SK-N-SH (cell line): ENCODE measurements at regions of chr22 and their contacts with region 1.

Region 1: DNA sequence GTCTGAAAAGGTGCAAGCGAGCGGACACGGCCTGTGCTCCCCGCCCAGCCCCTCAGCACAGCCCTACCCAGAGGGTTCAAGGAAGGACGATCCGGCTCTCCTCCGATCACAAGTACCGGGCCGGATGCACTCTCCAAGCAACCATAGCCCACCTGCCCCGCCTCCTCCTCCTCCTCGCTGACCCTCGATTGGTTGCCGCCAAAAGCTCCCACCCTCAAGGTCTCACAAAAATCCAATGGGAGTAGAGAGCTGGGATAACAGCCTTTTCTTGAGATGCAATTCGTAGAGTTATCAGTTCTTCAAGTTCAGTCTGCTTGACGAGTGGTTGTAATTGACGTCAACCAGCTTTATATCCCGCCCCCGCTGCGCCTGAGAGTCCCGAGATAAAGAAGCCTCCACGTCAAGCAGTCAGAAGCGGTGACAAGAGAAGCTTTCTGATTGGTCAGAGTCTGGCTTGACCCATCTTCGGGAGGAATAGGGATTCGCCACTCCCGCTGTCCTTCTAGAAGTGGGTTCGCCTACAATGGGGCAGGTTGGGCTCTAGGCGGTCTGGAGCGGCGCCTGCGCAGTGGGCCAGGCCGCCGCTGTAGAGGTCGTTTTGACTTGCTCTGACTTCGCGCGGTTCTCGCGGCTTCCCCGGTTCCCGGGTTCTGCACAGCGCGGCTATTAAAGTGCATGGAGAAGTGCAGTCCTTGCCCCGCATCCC is at the start of gene IFT27:
- DNase-seq: peak; percentile 99
- H3K4me3 ChIP-seq: peak within 1 kb of the TSS; percentile 84 to 86
- H3K27ac ChIP-seq: peak within 1 kb of the TSS in 1 of 2 experiments; percentile 76; a peak in 2 of 4 replicates
- H3K4me1 ChIP-seq: peaks cover 0 to 10% of the 10 kb centered on the region in 2 experiments; a peak in 3 of 4 replicates
- H3K27me3 ChIP-seq: no peaks in the 10 kb centered on the region
- CTCF ChIP-seq: no peak
- EP300 ChIP-seq: no peak
- RAD21 ChIP-seq: no peak
- polyA plus RNA-seq, gene IFT27: 29.4 and 31.5 TPM in 2 replicates

Region 2: DNA sequence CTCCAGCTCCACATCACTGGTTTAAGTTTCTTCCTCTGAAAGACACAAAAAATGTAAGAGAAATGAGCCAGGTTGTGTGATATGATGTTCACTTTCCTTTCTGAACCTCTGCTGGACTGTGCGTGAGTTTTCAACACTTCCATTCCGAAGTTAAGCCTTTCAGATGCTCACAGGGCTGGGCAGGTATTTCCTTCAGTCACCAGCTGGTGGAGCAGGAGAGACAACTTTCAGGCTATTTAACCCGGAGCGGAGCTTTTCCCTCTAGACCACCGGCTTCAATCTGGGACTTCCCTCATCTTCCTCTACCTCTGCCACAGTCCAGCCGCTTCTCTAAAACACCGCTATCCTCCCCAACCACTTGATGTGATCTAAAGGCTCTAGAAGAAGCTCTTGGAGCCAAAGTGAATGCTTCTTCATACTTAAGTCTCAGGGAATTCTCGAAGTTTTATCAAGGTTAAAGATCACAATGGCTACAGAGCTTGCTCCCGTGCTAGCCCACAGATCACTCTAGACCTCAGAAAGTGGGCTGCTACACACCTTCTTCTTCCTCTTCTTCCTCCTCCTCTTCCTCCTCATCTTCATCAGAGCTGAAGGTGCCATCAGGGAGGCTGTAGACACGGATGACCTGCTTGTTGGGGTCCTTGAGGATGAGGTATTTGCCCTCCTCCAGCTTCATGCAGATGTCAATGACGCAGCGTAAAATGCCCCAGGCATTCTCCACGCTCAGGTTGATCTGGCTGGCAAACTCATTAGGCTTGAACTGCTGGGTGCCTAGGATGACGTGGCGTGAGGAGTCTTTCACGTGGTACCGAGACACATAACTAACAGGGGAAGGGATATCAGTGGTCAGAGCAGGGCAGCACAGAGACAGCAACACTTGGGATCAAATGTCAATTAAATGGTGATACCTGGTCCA is 264.9 kb before region 1 on chr22:
- CTCF ChIA-PET with region 1: interaction called, 12 read pairs
- POLR2A ChIA-PET with region 1: interaction called, 4 read pairs
- DNase-seq: peak; percentile 62
- H3K4me3 ChIP-seq: no peak overlapping the region
- H3K27ac ChIP-seq: no peak overlapping the region; a peak in 1 of 4 replicates
- H3K4me1 ChIP-seq: peaks cover 0 to 9% of the 10 kb centered on the region in 2 experiments; a peak in 2 of 4 replicates
- H3K27me3 ChIP-seq: no peaks in the 10 kb centered on the region
- CTCF ChIP-seq: peak; percentile 64
- EP300 ChIP-seq: no peak
- RAD21 ChIP-seq: peak; percentile 41

Region 3: GRCh38 chr22:36552289-36552688 is 223.8 kb before region 1 on chr22:
- CTCF ChIA-PET with region 1: interaction called, 55 read pairs
- POLR2A ChIA-PET with region 1: no interaction called
- DNase-seq: no peak
- H3K4me3 ChIP-seq: no peak overlapping the region
- H3K27ac ChIP-seq: no peak overlapping the region
- H3K4me1 ChIP-seq: peaks cover 0 to 2% of the 10 kb centered on the region in 2 experiments; a peak in 1 of 4 replicates
- H3K27me3 ChIP-seq: peaks cover 31% of the 10 kb centered on the region
- CTCF ChIP-seq: no peak
- EP300 ChIP-seq: no peak
- RAD21 ChIP-seq: no peak

Region 4: DNA sequence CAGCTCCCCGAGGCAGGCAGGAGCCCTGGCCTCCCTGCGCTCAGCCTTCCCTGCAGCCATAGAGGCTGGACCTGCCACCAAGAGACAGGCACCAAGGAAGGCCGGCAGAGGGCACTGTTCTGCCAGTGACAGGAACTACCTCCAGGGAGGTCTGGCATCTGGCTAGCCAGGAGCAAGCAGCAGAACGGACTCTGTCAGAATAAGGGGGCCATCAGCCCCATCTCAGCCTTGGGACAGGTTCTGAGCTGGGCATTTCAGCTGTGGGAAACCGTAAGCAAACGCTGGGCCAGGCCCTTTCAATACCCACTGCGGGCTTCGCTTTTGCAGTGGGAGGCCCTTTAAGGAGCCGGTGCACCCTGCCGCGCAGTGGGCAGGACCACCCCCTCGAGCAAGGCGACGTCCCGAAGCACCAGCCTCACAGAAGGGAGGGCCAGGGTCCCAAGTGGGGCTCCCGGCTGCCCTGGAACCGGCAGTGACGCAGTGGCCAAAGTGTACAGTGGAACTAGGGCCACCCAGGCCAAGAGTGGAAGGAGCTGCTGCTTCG is 18.4 kb before region 1 on chr22:
- CTCF ChIA-PET with region 1: interaction called, 17 read pairs
- POLR2A ChIA-PET with region 1: interaction called, 11 read pairs
- DNase-seq: peak; percentile 83
- H3K4me3 ChIP-seq: no peak overlapping the region; a peak in 1 of 4 replicates
- H3K27ac ChIP-seq: no peak overlapping the region; a peak in 1 of 4 replicates
- H3K4me1 ChIP-seq: peaks cover 0 to 5% of the 10 kb centered on the region in 2 experiments; a peak in 1 of 4 replicates
- H3K27me3 ChIP-seq: no peaks in the 10 kb centered on the region
- CTCF ChIP-seq: peak; percentile 75
- EP300 ChIP-seq: no peak
- RAD21 ChIP-seq: peak; percentile 67

Region 5: DNA sequence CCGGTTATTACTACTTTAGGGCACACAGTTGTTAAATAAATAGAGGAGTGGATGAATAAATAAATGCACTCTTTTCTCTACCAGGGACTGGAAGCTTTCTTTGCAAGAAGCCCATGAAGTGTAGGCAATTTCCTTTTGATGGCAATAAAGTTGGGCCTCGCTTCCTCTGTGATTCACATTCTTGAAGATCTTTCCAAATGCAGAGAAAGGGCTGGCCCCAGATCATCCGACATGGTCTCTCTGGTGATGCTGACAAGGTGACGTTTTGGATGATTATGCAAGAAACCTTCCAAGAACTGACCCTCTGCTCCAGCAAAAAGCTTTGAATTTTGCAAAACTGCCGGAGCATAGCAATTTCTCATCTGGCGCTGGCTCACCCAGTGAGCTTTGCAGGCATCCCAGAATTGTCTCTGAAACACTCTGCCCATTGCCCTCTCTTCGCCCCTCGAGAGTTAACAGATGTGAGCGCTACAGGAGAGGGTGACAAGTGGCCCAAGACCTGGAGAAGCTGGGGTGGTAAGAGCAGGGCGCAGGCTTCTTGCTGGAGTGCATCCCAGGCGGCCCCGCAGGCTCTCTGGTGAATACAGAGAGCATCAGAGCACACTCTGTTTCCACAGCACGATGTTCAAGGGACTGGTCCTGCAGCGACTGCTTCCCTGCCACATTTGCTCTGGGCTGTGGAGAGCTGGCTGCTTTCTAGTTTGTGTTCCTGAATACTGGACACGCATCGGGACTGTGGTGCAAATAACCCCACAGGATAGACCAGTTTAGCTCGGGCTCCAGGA is 11.3 kb after region 1 on chr22:
- CTCF ChIA-PET with region 1: interaction called, 10 read pairs
- POLR2A ChIA-PET with region 1: no interaction called
- DNase-seq: no peak
- H3K4me3 ChIP-seq: no peak overlapping the region
- H3K27ac ChIP-seq: no peak overlapping the region
- H3K4me1 ChIP-seq: no peaks in the 10 kb centered on the region
- H3K27me3 ChIP-seq: peaks cover 37% of the 10 kb centered on the region
- CTCF ChIP-seq: no peak
- EP300 ChIP-seq: no peak
- RAD21 ChIP-seq: no peak